ENCODE measurements at regions of chr5 and their contacts with region 1.

Region 1: GRCh38 chr5:73625944-73626811 is at the start of gene ARHGEF28:
- DNase-seq: peak; percentile 82
- H3K4me3 ChIP-seq: peak within 1 kb of the TSS; percentile 74 to 100 (median 94)
- H3K27ac ChIP-seq: peak within 1 kb of the TSS; percentile 84
- H3K4me1 ChIP-seq: peaks cover 42% of the 10 kb centered on the region
- H3K27me3 ChIP-seq: no peaks in the 10 kb centered on the region
- CTCF ChIP-seq: no peak
- total RNA-seq, gene ARHGEF28: 74.0 to 96.1 TPM

Region 2: GRCh38 chr5:73654171-73654811 is 28.1 kb after region 1 on chr5:
- CTCF ChIA-PET with region 1: no interaction called
- dilution Hi-C with region 1: no loop called
- in situ Hi-C with region 1: no loop called
- intact Hi-C with region 1: loop called (anchors 1 kb)
- DNase-seq: peak; percentile 100
- H3K4me3 ChIP-seq: no peak overlapping the region
- H3K27ac ChIP-seq: peak overlapping the region; percentile 99
- H3K4me1 ChIP-seq: peaks cover 68% of the 10 kb centered on the region
- H3K27me3 ChIP-seq: no peaks in the 10 kb centered on the region
- CTCF ChIP-seq: no peak

Region 3: DNA sequence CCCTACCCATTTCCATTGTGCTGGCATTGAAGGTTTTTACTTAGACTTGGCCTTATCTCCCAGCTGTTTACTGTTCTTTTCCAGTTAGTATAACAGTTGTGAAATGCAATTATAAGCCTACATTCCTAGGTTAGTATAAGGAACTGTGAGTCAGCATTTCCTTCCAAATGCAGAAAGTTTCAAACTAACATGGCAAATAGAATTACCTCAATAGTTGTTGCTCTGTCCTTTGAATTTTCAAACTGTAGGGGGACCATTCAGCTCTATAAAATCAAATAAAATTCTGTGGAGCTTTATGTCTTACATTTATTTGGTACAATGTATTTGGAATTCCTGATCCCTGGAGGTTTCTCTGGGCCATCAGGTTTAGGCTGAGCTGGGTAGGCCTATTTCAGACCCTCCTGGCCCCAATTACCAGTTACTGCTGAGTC is 47.0 kb after region 1 on chr5:
- CTCF ChIA-PET with region 1: no interaction called
- dilution Hi-C with region 1: no loop called
- in situ Hi-C with region 1: no loop called
- intact Hi-C with region 1: loop called (anchors 1 kb)
- DNase-seq: peak; percentile 67
- H3K4me3 ChIP-seq: no peak overlapping the region
- H3K27ac ChIP-seq: peak overlapping the region; percentile 86
- H3K4me1 ChIP-seq: peaks cover 33% of the 10 kb centered on the region
- H3K27me3 ChIP-seq: no peaks in the 10 kb centered on the region
- CTCF ChIP-seq: peak in 1 of 2 donors; percentile 8

Region 4: GRCh38 chr5:73693481-73694061 is 67.4 kb after region 1 on chr5:
- CTCF ChIA-PET with region 1: no interaction called
- dilution Hi-C with region 1: no loop called
- in situ Hi-C with region 1: no loop called
- intact Hi-C with region 1: loop called (anchors 1 kb)
- DNase-seq: no peak
- H3K4me3 ChIP-seq: no peak overlapping the region
- H3K27ac ChIP-seq: no peak overlapping the region
- H3K4me1 ChIP-seq: peaks cover 32% of the 10 kb centered on the region
- H3K27me3 ChIP-seq: no peaks in the 10 kb centered on the region
- CTCF ChIP-seq: peak; percentile 58 to 61

Region 5: DNA sequence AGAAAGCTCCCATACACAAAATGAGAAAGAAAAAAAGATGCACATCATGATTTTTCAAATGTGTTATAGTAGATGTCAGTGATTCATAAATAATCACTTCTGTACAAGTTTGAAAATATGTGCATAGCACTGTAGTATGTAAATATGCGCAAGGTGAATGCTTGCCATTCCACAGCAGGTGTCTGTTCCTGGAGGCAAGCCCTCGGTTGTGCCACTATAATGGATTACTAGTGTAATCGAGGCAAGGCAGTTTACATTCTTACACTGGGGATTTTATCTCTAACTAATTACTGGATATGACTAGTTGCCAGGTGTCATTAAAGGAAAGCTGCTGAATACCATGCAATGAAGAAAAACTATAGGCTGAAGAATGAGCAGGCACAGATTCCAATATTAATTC is 93.5 kb after region 1 on chr5:
- CTCF ChIA-PET with region 1: no interaction called
- dilution Hi-C with region 1: no loop called
- in situ Hi-C with region 1: no loop called
- intact Hi-C with region 1: no loop called
- DNase-seq: no peak
- H3K4me3 ChIP-seq: no peak overlapping the region
- H3K27ac ChIP-seq: no peak overlapping the region
- H3K4me1 ChIP-seq: no peaks in the 10 kb centered on the region
- H3K27me3 ChIP-seq: no peaks in the 10 kb centered on the region
- CTCF ChIP-seq: no peak

Measured in mammary epithelial cell (primary cell).